ENCODE measurements at regions of chr14 and their contacts with region 1.

Region 1: GRCh38 chr14:105465584-105466031 is 9.0 kb upstream of the CRIP2 start:
- DNase-seq: peak; percentile 75 to 82
- H3K4me3 ChIP-seq: no peak overlapping the region
- H3K27ac ChIP-seq: no peak overlapping the region
- H3K4me1 ChIP-seq: peaks cover 37% of the 10 kb centered on the region
- H3K27me3 ChIP-seq: no peaks in the 10 kb centered on the region
- CTCF ChIP-seq: no peak

Region 2: GRCh38 chr14:105414456-105415371 is 50.9 kb before region 1 on chr14:
- CTCF ChIA-PET with region 1: no interaction called
- POLR2A ChIA-PET with region 1: no interaction called
- intact Hi-C with region 1: loop called (anchors 5 kb)
- DNase-seq: peak in 1 of 2 experiments; percentile 46
- H3K4me3 ChIP-seq: peak overlapping the region; percentile 43; the same call in 1 of the 2 replicates
- H3K27ac ChIP-seq: no peak overlapping the region
- H3K4me1 ChIP-seq: peaks cover 12% of the 10 kb centered on the region
- H3K27me3 ChIP-seq: peaks cover 34% of the 10 kb centered on the region
- CTCF ChIP-seq: no peak; the same call in 1 of the 2 replicates

Region 3: DNA sequence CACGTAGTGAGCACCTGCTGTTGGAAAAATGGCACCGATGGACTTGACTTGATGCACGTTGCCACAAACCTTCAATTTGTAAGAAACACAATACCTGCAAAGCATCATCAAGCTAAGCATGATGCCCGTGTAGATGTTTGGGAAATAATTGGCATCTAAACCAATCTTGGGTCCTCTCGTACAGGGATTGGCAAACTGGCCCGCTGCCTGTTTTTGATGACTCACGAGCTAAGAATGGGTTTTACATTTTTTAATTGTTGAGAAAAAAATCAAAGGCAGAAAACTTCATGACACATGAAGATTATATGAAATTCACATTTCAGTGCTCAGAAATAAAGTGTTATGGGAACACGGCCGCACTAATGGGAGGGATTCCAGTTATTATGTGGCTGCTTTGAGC is 35.1 kb before region 1 on chr14:
- CTCF ChIA-PET with region 1: no interaction called
- POLR2A ChIA-PET with region 1: no interaction called
- intact Hi-C with region 1: loop called (anchors 2 kb)
- DNase-seq: peak; percentile 75 to 81
- H3K4me3 ChIP-seq: no peak overlapping the region
- H3K27ac ChIP-seq: peak overlapping the region; percentile 36; the same call in 1 of the 2 replicates
- H3K4me1 ChIP-seq: peaks cover 14% of the 10 kb centered on the region
- H3K27me3 ChIP-seq: no peaks in the 10 kb centered on the region
- CTCF ChIP-seq: no peak

Measured in PC-9 (cell line).